ENCODE measurements at regions of chr16 and their contacts with region 1.

Region 1: DNA sequence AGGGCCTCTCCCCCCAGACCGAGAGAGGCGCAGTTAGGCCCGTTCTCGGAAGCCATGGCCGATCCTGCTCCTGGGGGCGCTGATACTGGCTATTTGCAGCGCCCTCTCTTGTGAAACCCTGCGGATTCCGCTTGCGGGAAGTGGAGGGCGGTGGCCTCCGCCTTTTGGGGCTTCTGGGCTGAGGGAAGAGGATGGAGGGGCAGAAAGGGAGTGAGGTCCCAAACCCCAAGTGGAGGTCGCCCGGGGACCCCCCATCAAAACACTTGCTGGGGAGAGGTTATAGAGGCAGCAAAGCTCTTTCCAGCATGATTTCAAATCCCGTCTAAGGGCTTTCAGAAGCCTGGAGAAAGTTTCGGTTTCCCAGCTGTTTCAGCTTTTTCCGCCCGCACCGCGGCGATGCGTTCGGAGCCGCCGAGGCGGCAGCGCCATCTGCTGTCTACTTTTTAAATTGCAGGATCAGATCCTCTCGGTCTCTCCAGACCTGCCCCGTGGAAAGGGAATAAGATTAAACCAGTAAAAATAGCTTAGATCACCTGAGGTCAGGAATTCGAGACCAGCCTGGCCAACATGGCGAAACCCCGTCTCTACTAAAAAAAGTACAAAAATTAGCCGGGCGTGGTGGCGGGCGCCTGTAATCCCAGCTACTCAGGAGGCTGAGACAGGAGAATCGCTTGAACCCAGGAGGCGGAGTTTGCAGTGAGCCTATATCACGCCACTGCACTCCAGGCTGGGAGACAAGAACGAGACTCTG is 15.8 kb downstream of the SNX20 start:
- DNase-seq: peak; percentile 71 to 86 (median 81)
- H3K4me3 ChIP-seq: peak overlapping the region; percentile 30 to 84 (median 72)
- H3K27ac ChIP-seq: no peak overlapping the region
- H3K4me1 ChIP-seq: peaks cover 8 to 50% (median 44%) of the 10 kb centered on the region in 4 experiments
- H3K27me3 ChIP-seq: no peaks in the 10 kb centered on the region

Region 2: DNA sequence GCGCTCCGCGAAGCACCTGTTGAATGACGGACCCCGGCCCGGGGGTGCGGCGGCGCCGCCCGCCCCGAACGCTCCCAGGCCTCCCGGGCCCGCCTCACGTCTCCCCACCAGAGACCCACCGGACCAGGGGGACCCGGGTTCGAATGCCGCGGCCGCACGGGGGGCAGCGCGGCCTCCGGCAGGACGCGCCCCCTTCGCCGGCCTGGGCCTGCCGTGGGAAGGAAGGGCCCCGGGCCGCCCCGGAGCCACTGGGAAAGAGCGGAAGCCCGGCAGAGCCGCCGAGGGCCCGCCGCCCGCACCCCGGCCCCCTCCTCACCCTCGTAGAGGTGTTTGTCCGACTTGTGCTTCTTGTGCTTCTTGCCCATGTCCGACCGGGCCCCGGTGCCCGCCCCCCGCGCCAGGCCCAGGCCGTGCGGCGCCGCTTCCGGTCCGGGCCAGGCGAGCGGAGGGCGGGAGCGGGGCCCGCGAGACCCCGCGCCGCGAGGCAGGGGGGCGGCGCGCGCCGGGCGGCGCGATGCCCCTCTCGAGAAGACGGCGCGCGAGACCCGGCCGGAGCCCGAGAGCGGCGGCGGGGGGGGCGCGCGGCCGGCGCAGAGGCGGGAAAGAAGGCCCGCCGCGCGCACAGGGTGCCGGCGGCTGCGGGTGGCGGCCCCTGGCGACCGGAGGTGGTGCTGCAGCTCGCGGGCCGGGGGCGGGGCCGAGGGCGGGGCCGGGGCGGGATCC is 296.7 kb before region 1 on chr16 and contains the start of gene BRD7:
- CTCF ChIA-PET with region 1: interaction called, 11 read pairs
- POLR2A ChIA-PET with region 1: no interaction called
- DNase-seq: peak; percentile 57 to 82 (median 76)
- H3K4me3 ChIP-seq: peak within 1 kb of the TSS; percentile 72 to 89 (median 81)
- H3K27ac ChIP-seq: peak within 1 kb of the TSS; percentile 60 to 79
- H3K4me1 ChIP-seq: peaks cover 7 to 33% (median 22%) of the 10 kb centered on the region in 4 experiments
- H3K27me3 ChIP-seq: no peaks in the 10 kb centered on the region

Region 3: DNA sequence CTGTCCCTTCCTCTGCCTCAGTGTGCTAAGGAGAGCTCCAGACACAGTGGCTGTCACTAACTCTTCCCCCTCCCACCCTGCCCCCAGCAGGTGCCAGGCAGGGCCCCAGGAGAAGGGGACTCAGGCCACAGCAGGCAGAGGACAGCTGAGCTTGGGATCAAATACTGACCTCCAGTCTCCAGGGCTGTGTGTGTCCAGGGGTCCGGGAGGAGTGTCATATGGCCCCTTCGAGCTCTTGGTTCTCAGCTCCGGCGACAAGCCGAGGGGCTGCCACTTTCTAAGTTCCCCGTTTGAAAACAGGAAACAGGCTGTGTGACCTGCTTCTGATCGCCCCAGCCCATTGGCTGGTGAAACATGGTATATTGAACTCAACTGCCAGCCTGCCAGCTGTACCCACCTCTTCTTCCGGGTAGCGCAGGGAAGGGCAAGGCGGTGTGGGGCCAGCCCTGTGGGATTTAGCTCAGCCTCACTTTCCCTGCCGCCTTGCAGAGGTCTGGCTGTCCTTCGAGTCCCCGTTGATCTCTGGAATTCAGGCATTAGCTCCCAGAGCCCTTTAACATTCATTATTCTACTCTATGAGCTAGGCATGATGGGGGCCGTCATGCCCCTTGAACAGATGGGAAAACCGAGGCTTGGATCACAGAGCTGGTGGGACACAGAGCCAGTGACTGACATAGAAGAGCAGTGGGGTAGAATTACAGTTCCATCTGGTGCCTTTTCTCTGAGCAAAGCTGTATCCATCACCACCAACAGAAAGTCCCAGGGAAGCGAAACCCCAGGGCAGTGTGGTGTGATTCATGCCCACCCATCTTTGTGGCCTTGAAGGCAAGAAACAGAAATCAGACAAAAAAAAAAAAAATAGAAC is 15.9 kb after region 1 on chr16 and contains the start of gene SNX20:
- CTCF ChIA-PET with region 1: interaction called, 132 read pairs
- POLR2A ChIA-PET with region 1: interaction called, 7 read pairs
- DNase-seq: peak; percentile 53 to 86 (median 80)
- H3K4me3 ChIP-seq: peak within 1 kb of the TSS; percentile 34 to 91 (median 83)
- H3K27ac ChIP-seq: peak within 1 kb of the TSS; percentile 83 to 89
- H3K4me1 ChIP-seq: peaks cover 39 to 80% (median 74%) of the 10 kb centered on the region in 4 experiments
- H3K27me3 ChIP-seq: no peaks in the 10 kb centered on the region

Region 4: GRCh38 chr16:50702725-50703124 is 37.4 kb after region 1 on chr16:
- CTCF ChIA-PET with region 1: interaction called, 14 read pairs
- POLR2A ChIA-PET with region 1: no interaction called
- DNase-seq: peak in 2 of 3 donors; percentile 92 to 95
- H3K4me3 ChIP-seq: no peak overlapping the region
- H3K27ac ChIP-seq: peak overlapping the region in 1 of 2 experiments; percentile 37
- H3K4me1 ChIP-seq: peaks cover 4 to 37% (median 27%) of the 10 kb centered on the region in 4 experiments
- H3K27me3 ChIP-seq: no peaks in the 10 kb centered on the region

Region 5: GRCh38 chr16:50741808-50742575 is 76.7 kb after region 1 on chr16 and contains the start of gene CYLD:
- CTCF ChIA-PET with region 1: interaction called, 224 read pairs
- POLR2A ChIA-PET with region 1: interaction called, 9 read pairs
- DNase-seq: peak; percentile 99 to 100 (median 100)
- H3K4me3 ChIP-seq: peak within 1 kb of the TSS; percentile 53 to 91 (median 80)
- H3K27ac ChIP-seq: peak within 1 kb of the TSS; percentile 91 to 92
- H3K4me1 ChIP-seq: peaks cover 30 to 55% (median 41%) of the 10 kb centered on the region in 4 experiments
- H3K27me3 ChIP-seq: no peaks in the 10 kb centered on the region

Region 6: DNA sequence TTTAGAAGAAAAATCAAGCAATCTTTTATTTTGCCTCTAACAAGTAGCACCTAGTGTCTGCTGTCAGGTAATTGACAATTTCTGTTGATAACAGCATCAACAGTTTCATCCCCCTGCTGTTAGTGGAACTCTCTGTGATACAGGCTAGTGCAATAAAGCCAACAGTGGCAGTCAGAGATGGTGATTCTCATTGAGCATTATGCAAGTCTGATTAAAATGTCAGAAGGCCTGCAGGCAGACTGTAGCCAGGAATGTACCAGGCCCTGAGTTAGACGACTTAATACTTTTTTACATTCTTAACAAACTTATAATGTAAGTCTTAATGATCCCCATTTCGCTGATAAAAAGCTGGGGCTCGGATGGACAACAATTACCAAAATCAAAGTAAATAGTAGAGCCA is 91.2 kb after region 1 on chr16:
- CTCF ChIA-PET with region 1: interaction called, 21 read pairs
- POLR2A ChIA-PET with region 1: interaction called, 3 read pairs
- DNase-seq: no peak
- H3K4me3 ChIP-seq: no peak overlapping the region
- H3K27ac ChIP-seq: no peak overlapping the region
- H3K4me1 ChIP-seq: no peaks in the 10 kb centered on the region
- H3K27me3 ChIP-seq: no peaks in the 10 kb centered on the region

Measured in common myeloid progenitor, CD34-positive (primary cell).